HEK293T (cell line): ENCODE measurements at regions of chr12 and their contacts with region 1.

Region 1: DNA sequence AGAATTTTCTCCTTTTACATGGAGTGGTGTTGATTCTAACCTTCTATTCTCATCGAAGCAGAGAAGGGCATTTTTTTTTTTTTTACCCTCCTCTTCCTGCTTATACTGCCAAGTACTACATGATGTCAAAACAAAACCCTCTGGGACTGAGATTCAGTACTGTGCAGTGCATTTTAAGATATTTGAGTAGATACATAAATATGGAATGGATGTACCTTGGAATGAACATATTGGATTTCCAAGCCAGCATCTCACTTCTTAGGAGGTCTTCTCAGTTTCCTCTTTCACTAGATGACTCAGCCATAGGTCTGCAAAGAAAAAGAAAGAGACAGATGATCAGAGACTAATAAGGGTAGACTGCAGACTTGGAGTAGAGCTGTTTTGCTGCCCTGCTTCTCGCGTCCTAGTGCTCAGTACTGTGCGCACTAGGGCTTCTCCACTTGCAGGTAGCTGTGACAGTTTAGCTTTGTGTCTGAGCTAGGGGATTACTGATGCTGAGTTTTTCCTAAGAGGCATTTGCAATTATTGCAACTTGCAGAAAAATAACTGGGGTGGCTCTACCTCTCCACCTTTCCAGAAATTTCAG is 20.4 kb downstream of the TPH2 start:
- DNase-seq: no peak

Region 2: GRCh38 chr12:71942259-71942658 is 16.8 kb before region 1 on chr12:
- CTCF ChIA-PET with region 1: interaction called, 12 read pairs
- POLR2A ChIA-PET with region 1: no interaction called
- DNase-seq: no peak